Ovary (tissue), 10 donors: ENCODE measurements at regions of chr11 and their contacts with region 1.

Region 1: DNA sequence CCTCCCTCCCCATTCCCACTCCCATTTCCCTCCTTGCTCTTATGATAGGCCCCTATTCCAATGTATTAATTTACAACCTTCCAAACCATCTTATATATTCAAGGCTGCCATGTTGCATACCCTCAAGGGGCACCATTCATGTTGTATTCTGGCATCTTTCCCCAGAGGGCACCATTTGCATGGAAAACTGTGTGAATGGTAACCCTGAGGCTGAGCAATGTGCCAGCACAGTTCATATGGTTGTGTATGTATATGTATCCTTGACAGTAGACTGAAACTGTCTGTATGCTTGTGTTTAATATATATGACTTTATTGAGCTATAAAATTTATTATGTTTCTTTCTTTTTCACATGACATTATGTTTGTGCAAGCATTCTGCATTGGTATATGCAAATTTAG is 7.3 kb downstream of the RASSF10 start:
- DNase-seq: no peak
- H3K4me3 ChIP-seq: no peak overlapping the region
- H3K27ac ChIP-seq: no peak overlapping the region
- H3K4me1 ChIP-seq: no peaks in the 10 kb centered on the region
- H3K27me3 ChIP-seq: no peaks in the 10 kb centered on the region
- CTCF ChIP-seq: no peak
- EP300 ChIP-seq: no peak
- POLR2A ChIP-seq: no peak

Region 2: DNA sequence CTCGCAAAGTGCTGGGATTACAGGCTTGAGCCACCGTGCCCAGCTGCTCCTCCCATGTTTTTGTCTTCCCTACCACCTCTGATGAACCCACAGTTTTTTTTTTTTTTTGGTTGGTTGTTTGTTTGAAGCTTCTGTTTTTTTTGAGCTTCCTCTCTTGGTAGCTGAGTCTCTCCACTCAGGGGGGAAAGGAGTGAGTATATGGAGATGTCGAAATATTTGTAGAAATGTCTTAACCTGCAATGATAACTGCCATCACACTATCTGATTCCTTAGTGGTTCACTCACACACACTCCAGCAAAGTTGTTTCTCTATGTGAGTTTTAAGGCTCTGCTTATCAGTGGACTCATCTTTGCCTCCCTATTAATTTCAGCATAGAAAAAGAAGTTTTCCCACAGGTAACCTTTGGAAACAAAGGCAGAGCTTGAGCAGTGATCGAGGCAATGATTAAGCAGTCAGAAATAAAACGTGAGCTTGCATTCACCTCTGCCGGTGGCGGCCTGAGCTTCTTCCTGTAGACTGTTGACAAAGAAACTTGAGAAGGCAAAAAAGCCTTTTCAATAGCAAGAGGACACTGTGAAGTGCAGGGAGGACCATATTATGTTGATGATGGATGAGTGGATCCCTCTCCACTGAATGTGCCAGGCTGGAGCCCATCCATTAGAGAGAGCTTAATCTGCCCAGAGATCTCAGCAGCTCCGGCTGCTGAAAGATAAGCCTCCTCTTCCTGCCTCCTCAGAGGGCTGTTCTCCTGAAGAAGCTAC is 36.3 kb before region 1 on chr11:
- intact Hi-C with region 1: no loop called
- DNase-seq: no peak
- H3K4me3 ChIP-seq: no peak overlapping the region
- H3K27ac ChIP-seq: no peak overlapping the region
- H3K4me1 ChIP-seq: no peaks in the 10 kb centered on the region
- H3K27me3 ChIP-seq: no peaks in the 10 kb centered on the region
- CTCF ChIP-seq: no peak
- EP300 ChIP-seq: no peak
- POLR2A ChIP-seq: no peak

Region 3: DNA sequence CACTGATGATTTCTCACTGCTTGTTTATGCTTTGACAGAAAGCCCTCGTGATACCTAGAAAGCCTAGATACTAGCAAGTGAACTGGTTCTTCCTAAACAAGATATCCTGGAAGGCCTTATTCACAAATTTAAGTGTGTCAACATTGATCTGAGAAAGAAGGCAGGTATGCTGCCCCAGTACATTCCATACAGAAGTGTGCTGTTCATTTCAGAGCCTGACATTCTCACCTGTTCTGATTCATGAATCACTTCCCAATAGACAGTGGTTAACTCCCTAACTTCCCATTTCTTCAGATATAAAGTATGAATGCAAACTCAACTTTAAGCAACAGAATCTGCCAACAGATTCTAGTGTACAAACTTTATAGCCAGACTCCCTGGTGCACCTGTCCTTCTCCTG is 22.8 kb before region 1 on chr11:
- intact Hi-C with region 1: loop called in 1 of 4 experiments (anchors 1 kb)
- DNase-seq: no peak
- H3K4me3 ChIP-seq: no peak overlapping the region
- H3K27ac ChIP-seq: no peak overlapping the region
- H3K4me1 ChIP-seq: no peaks in the 10 kb centered on the region
- H3K27me3 ChIP-seq: no peaks in the 10 kb centered on the region
- CTCF ChIP-seq: no peak
- EP300 ChIP-seq: no peak
- POLR2A ChIP-seq: no peak